ENCODE measurements at regions of chr14 and their contacts with region 1.

Region 1: DNA sequence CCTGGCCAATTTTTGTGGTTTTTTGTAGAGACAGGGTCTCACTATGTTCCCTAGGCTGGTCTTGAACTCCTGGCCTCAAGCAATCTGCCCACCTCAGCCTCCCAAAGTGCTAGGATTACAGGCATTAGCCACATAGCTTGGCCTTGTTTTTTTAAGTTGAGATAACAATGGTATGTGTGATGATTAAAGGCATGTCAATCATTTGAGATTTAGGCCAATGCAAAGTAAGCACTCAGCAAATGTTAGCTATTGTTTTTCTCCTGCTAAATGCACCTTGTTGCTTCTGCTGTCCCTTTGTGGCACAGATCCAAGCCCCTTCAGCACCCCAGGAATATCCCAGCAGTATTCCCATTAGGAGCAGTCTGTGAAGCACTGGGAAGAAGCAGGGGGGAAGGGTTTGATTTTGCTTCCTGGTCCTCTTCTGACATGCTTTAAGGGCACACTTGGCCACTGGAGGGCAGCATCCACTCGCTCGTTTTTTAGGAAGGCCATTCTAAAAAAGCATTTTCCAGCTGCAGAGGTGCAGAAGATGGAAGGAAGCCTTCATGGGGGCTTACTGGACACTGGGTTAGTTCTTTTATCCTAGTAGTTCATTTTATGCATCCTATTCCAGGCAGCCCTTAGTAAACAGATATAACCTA is 70.2 kb upstream of the ZFP36L1 start:
- DNase-seq: peak; percentile 80
- H3K4me3 Mint-ChIP-seq: no peak overlapping the region
- H3K27ac Mint-ChIP-seq: no peak overlapping the region
- H3K4me1 Mint-ChIP-seq: peaks cover 1% of the 10 kb centered on the region
- H3K27me3 Mint-ChIP-seq: no peaks in the 10 kb centered on the region

Region 2: DNA sequence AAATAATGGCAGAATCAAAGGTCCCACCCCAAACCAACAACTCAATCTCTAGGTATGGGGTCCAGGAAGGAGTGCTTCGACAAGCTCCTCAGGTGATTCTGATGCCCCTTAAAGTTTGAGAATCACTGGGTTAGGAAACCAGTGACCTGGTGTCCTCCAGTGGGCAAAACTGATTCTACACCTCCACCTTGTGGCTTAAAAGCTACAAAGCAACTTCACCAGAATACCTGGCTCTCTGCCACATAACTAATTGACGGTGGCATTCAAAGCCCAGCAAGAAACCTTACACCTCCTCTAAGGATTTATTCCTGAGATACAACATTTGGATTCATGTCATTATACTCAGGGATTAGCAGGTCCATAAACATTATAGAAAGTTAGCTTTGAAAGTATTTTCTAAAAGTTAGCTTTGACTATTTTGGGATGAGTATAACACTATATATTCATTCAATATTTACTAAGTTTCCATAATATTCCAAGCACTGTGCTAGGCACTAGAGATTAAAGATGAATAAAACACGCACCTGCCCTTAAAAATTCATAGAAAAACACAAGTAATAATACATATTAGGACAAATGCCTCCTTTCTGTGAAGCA is 244.4 kb after region 1 on chr14:
- CTCF ChIA-PET with region 1: interaction called, 16 read pairs
- POLR2A ChIA-PET with region 1: no interaction called
- DNase-seq: peak; percentile 52
- H3K4me3 Mint-ChIP-seq: no peak overlapping the region
- H3K27ac Mint-ChIP-seq: peak overlapping the region; percentile 52
- H3K4me1 Mint-ChIP-seq: peaks cover under 1% of the 10 kb centered on the region
- H3K27me3 Mint-ChIP-seq: no peaks in the 10 kb centered on the region